CD4-positive, alpha-beta T cell (primary cell): ENCODE measurements at regions of chr9 and their contacts with region 1.

Region 1: GRCh38 chr9:31065691-31066090 is 1318.8 kb upstream of the ACO1 start:
- DNase-seq: no peak
- ATAC-seq: no peak
- H3K4me3 ChIP-seq: no peak overlapping the region
- H3K4me3 Mint-ChIP-seq: no peak overlapping the region
- H3K27ac ChIP-seq: no peak overlapping the region
- H3K27ac Mint-ChIP-seq: no peak overlapping the region
- H3K4me1 ChIP-seq: no peaks in the 10 kb centered on the region
- H3K4me1 Mint-ChIP-seq: no peaks in the 10 kb centered on the region
- H3K27me3 ChIP-seq: no peaks in the 10 kb centered on the region
- H3K27me3 Mint-ChIP-seq: peaks cover 11% of the 10 kb centered on the region
- CTCF ChIP-seq: no peak

Region 2: GRCh38 chr9:29981013-29981412 is 1084.7 kb before region 1 on chr9:
- CTCF ChIA-PET with region 1: no interaction called
- POLR2A ChIA-PET with region 1: no interaction called
- intact Hi-C with region 1: loop called in 1 of 2 experiments (anchors 5 kb)
- DNase-seq: no peak
- ATAC-seq: no peak
- H3K4me3 ChIP-seq: no peak overlapping the region
- H3K4me3 Mint-ChIP-seq: no peak overlapping the region
- H3K27ac ChIP-seq: no peak overlapping the region
- H3K27ac Mint-ChIP-seq: no peak overlapping the region
- H3K4me1 ChIP-seq: no peaks in the 10 kb centered on the region
- H3K4me1 Mint-ChIP-seq: no peaks in the 10 kb centered on the region
- H3K27me3 ChIP-seq: no peaks in the 10 kb centered on the region
- H3K27me3 Mint-ChIP-seq: no peaks in the 10 kb centered on the region
- CTCF ChIP-seq: no peak

Region 3: DNA sequence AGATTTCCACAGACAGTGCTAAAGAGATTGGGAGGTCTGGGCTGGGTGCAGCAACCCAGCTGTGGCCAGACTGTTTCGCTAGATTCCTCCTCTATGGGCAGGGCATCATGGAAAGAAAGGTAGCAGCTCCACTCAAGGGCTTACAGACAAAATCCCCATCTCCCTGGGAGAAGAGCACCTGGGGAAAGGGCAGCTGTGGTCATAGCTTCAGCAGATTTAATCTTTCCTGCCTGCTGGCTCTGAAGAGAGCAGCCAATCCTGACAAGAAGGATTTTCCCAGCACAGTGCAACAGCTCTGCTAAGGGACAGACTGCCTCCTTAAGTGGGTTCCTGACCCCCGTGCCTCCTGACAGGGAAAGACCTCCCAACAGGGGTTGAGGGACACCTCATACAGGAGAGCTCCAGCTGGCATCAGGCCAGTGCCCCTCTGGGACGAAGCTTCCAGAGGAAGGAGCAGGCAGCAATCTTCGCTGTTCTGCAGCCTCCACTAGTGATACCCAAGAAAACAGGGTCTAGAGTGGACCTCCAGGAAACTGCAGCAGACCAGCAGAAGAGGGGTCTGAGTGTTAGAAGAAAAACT is 60.5 kb before region 1 on chr9:
- CTCF ChIA-PET with region 1: no interaction called
- POLR2A ChIA-PET with region 1: no interaction called
- intact Hi-C with region 1: loop called in 1 of 2 experiments (anchors 10 kb)
- DNase-seq: no peak
- ATAC-seq: no peak
- H3K4me3 ChIP-seq: no peak overlapping the region
- H3K4me3 Mint-ChIP-seq: no peak overlapping the region
- H3K27ac ChIP-seq: no peak overlapping the region
- H3K27ac Mint-ChIP-seq: no peak overlapping the region
- H3K4me1 ChIP-seq: no peaks in the 10 kb centered on the region
- H3K4me1 Mint-ChIP-seq: no peaks in the 10 kb centered on the region
- H3K27me3 ChIP-seq: no peaks in the 10 kb centered on the region
- H3K27me3 Mint-ChIP-seq: no peaks in the 10 kb centered on the region
- CTCF ChIP-seq: no peak